ENCODE measurements at regions of chr17 and their contacts with region 1.

Region 1: GRCh38 chr17:5111402-5112204 is at the start of gene ZNF232:
- DNase-seq: peak; percentile 95
- ATAC-seq: peak; percentile 92
- H3K4me3 Mint-ChIP-seq: peak within 1 kb of the TSS; percentile 84
- H3K27ac Mint-ChIP-seq: peak within 1 kb of the TSS; percentile 76
- H3K4me1 Mint-ChIP-seq: peaks cover 32% of the 10 kb centered on the region
- H3K27me3 Mint-ChIP-seq: peaks cover 13% of the 10 kb centered on the region
- CTCF ChIP-seq: no peak
- total RNA-seq, gene ZNF232: 16.5 to 19.3 TPM

Region 2: DNA sequence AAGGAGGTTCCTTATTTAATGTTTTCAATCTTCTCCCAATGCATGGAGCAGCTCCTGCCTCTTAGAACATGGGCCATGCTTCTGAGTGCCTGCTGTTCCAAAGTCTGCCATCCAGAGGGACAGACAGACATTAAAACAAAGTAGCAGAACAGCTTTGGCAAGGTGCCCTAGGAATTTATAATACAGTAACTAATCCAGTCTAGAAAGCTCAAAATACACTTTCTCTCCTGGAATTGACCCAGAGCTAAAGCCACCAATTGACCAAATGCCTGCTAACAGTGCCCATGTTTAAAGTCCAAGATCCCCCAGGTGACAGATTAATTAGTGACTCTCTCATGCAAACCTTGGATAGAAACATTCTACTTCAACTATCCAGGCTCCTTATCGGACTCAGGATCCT is 197.6 kb before region 1 on chr17:
- CTCF ChIA-PET with region 1: no interaction called
- POLR2A ChIA-PET with region 1: no interaction called
- intact Hi-C with region 1: no loop called
- DNase-seq: no peak
- ATAC-seq: no peak
- H3K4me3 Mint-ChIP-seq: no peak overlapping the region
- H3K27ac Mint-ChIP-seq: no peak overlapping the region
- H3K4me1 Mint-ChIP-seq: no peaks in the 10 kb centered on the region
- H3K27me3 Mint-ChIP-seq: no peaks in the 10 kb centered on the region
- CTCF ChIP-seq: no peak

Region 3: GRCh38 chr17:5078106-5079028 is 33.2 kb before region 1 on chr17 and contains the start of gene ZFP3:
- CTCF ChIA-PET with region 1: interaction called, 16 read pairs
- POLR2A ChIA-PET with region 1: interaction called, 12 read pairs
- intact Hi-C with region 1: no loop called
- DNase-seq: peak; percentile 89
- ATAC-seq: peak; percentile 87
- H3K4me3 Mint-ChIP-seq: peak within 1 kb of the TSS; percentile 73
- H3K27ac Mint-ChIP-seq: peak within 1 kb of the TSS; percentile 85
- H3K4me1 Mint-ChIP-seq: peaks cover 28% of the 10 kb centered on the region
- H3K27me3 Mint-ChIP-seq: no peaks in the 10 kb centered on the region
- CTCF ChIP-seq: no peak
- total RNA-seq, gene ZFP3: 1.5 to 1.9 TPM

Measured in activated CD8-positive, alpha-beta T cell treated with anti-CD3 and anti-CD28 coated beads for 36 hours (primary cell).